ENCODE measurements at regions of chr2 and their contacts with region 1.

Region 1: GRCh38 chr2:168090366-168091135 is 156.8 kb downstream of the STK39 start:
- DNase-seq: peak; percentile 23
- ATAC-seq: peak; percentile 33
- H3K4me3 ChIP-seq: no peak overlapping the region
- H3K4me3 Mint-ChIP-seq: peak overlapping the region; percentile 52
- H3K27ac ChIP-seq: peak overlapping the region in 1 of 2 donors; percentile 60
- H3K27ac Mint-ChIP-seq: peak overlapping the region; percentile 82
- H3K4me1 ChIP-seq: peaks cover 20 to 26% of the 10 kb centered on the region in 2 donors
- H3K4me1 Mint-ChIP-seq: peaks cover 27% of the 10 kb centered on the region
- H3K27me3 ChIP-seq: no peaks in the 10 kb centered on the region
- H3K27me3 Mint-ChIP-seq: no peaks in the 10 kb centered on the region
- CTCF ChIP-seq: no peak

Region 2: GRCh38 chr2:168030862-168031624 is 59.5 kb before region 1 on chr2:
- CTCF ChIA-PET with region 1: no interaction called
- POLR2A ChIA-PET with region 1: no interaction called
- intact Hi-C with region 1: loop called (anchors 10 kb)
- DNase-seq: peak; percentile 22
- ATAC-seq: peak; percentile 81
- H3K4me3 ChIP-seq: no peak overlapping the region
- H3K4me3 Mint-ChIP-seq: no peak overlapping the region
- H3K27ac ChIP-seq: no peak overlapping the region
- H3K27ac Mint-ChIP-seq: peak overlapping the region; percentile 11
- H3K4me1 ChIP-seq: peaks cover 0 to 4% of the 10 kb centered on the region in 2 donors
- H3K4me1 Mint-ChIP-seq: peaks cover 21% of the 10 kb centered on the region
- H3K27me3 ChIP-seq: no peaks in the 10 kb centered on the region
- H3K27me3 Mint-ChIP-seq: no peaks in the 10 kb centered on the region
- CTCF ChIP-seq: no peak